SK-N-SH (cell line): ENCODE measurements at regions of chr2 and their contacts with region 1.

Region 1: DNA sequence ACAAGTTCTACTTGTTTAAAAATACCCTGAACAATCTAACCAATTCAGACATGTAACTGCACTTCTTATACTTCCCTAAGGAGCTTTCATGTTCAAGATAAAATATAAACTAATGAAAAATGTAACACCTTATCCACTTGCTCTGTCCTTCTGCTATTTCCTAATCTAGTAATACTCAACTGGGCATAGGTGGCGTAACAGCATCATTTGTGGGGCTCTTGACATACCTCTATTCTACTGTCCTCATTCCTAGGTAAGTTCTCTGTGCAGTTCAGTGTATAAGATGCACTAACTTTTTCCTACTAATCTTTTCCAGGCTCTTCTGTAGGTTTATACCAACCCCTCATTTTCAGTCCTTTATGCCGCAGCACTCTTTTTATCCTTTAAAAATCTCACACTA is 36.7 kb downstream of the PRKD3 start:
- DNase-seq: peak; percentile 46
- H3K4me3 ChIP-seq: no peak overlapping the region
- H3K27ac ChIP-seq: peak overlapping the region in 1 of 2 experiments; percentile 51; a peak in 1 of 4 replicates
- H3K4me1 ChIP-seq: peaks cover 8 to 11% of the 10 kb centered on the region in 2 experiments
- H3K27me3 ChIP-seq: no peaks in the 10 kb centered on the region
- CTCF ChIP-seq: peak; percentile 43
- EP300 ChIP-seq: no peak
- RAD21 ChIP-seq: peak; percentile 86

Region 2: GRCh38 chr2:37246205-37246604 is 41.8 kb before region 1 on chr2:
- CTCF ChIA-PET with region 1: no interaction called
- POLR2A ChIA-PET with region 1: no interaction called
- DNase-seq: no peak
- H3K4me3 ChIP-seq: no peak overlapping the region
- H3K27ac ChIP-seq: no peak overlapping the region
- H3K4me1 ChIP-seq: peaks cover 0 to 5% of the 10 kb centered on the region in 2 experiments; a peak in 2 of 4 replicates
- H3K27me3 ChIP-seq: no peaks in the 10 kb centered on the region
- CTCF ChIP-seq: no peak
- EP300 ChIP-seq: no peak
- RAD21 ChIP-seq: no peak

Region 3: DNA sequence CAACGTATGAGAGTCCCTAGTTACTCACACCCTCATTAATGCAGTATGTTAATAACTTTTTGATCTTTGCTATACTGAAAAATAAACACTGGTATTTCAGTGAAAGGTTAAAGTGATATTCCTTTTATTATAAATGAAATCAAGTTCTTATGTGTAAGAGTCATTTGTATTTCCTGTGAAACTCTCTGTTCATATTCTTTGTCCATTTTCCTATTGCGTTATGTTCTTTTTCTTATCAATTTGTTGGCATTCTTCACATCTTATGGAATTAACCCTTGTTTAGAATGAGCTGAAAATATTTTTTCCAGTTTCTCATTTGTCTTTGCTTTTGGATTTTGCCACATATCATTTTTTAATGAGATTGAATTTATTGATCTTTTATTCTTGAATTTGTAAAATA is 11.7 kb before region 1 on chr2:
- CTCF ChIA-PET with region 1: interaction called, 13 read pairs
- POLR2A ChIA-PET with region 1: no interaction called
- DNase-seq: no peak
- H3K4me3 ChIP-seq: no peak overlapping the region
- H3K27ac ChIP-seq: no peak overlapping the region
- H3K4me1 ChIP-seq: no peaks in the 10 kb centered on the region
- H3K27me3 ChIP-seq: no peaks in the 10 kb centered on the region
- CTCF ChIP-seq: no peak
- EP300 ChIP-seq: no peak
- RAD21 ChIP-seq: no peak

Region 4: DNA sequence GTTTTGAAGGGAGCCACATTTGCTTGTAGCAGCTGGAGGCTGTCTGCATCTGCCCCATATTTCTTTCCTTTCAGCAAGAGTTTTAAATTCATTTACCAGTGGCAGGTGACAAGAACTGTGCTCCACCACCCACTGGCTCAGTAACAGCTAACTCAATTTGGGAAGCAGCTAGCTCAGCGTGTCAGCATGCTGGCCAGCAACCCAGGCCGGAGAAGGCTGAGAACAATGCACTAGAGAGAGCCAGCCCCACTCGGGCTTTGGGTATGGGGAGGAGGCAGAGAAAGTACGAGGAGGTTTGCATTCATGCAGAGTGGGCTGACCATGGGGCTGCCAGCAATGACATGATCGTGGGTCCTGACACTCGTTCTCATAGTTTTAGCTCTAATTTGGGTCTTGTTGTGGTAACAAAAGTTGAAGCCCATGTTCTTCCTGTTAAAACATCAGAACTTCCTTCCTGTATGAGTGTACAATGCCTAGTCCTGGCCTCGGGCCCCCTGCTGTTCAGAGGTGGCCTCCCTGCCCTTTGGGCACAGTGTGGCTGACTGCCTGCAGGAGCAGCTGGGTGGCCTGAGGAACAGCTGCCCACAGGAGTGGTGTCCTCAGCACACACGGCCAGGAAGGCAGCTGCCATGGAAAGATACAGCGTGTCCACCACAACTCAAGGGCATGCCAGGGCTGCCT is 360.5 kb after region 1 on chr2:
- CTCF ChIA-PET with region 1: no interaction called
- POLR2A ChIA-PET with region 1: no interaction called
- DNase-seq: no peak
- H3K4me3 ChIP-seq: no peak overlapping the region; a peak in 1 of 4 replicates
- H3K27ac ChIP-seq: peak overlapping the region; percentile 11 to 68; a peak in 3 of 4 replicates
- H3K4me1 ChIP-seq: peaks cover 47 to 50% of the 10 kb centered on the region in 2 experiments
- H3K27me3 ChIP-seq: no peaks in the 10 kb centered on the region
- CTCF ChIP-seq: peak; percentile 10; the same call in 1 of the 2 replicates
- EP300 ChIP-seq: peak in 1 of 2 experiments; percentile 29; a peak in 1 of 4 replicates
- RAD21 ChIP-seq: no peak